ENCODE measurements at regions of chrX and their contacts with region 1.

Region 1: DNA sequence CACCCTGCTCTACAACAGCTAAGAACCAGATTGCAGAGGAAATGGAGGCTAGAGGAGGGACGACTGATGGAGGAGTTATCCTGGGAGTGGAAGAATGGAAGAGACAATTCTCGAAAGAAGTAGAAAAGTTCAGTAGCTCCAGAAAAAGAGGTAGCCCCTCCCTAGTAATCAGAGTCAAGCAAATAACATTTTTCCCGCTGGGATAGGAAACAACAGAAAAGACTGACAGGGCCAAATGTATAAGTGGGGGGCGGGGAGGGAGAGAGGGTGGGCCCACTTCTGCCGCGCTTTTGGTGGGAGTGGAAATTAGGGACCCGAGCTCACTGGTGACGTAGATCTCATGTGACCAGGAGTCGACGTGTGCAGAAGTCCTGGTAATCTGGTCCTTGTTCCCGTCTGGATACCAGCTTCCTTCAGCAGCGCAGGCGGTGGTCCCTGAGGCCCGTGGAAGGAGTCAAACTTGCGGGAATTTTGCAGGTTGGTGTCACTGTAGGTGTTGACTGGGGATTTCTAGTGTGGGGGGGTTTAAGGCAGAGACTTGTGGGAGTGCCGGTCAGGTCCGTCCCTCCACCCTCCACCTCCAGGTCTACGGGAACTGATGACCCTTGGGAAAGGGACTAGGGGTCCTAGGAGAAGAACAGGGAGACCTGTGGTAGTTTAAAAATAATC is at the start of gene TCEAL9:
- DNase-seq: peak; percentile 72

Region 2: GRCh38 chrX:103343105-103343504 is 13.2 kb before region 1 on chrX:
- CTCF ChIA-PET with region 1: interaction called, 4 read pairs
- POLR2A ChIA-PET with region 1: interaction called, 15 read pairs
- DNase-seq: peak; percentile 59

Region 3: DNA sequence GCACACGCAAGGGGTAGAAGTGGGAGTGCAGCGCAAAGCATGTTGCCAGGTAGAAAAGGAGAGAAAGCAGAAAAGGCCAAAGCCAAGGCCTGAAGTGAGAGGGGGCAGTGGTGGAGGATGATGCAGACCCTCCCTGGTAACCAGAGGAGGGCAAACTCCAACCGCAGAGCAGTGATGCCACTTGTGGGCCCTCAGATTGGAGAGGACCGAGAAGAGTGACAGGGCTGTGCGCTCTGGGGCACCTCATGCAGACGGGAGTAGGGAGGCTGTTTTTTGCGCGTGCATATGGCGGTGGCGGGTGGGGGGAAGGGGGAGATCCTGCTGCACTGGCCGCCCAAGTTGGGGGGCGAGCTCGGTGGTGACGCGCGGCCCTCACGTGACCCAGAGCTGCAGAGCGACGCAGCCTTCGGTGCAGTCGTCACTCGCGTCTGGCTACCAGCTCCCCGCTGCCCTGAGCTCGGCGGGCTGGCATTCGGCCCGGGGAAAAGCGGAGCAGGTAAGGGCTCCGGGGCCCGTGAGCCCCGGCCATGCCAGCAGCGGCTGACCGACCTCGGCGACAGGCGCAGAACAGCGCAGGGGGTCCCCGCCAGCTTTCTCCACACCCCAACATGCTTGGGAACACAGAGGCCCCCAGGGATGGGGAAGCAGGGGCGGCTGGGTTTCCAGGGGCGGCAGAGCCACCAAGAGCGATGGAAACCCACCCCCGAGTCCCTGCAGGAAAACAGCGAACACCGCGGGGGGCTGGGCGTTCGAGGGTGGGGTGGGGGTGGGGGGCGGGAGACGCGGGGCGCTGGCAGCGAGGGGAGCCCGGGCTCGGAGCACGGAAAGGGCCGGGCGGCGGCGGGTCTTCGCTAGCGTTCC is 20.1 kb after region 1 on chrX and contains the start of gene BEX3:
- CTCF ChIA-PET with region 1: interaction called, 3 read pairs
- POLR2A ChIA-PET with region 1: interaction called, 55 read pairs
- DNase-seq: peak; percentile 69

Region 4: GRCh38 chrX:103404231-103405208 is 48.3 kb after region 1 on chrX:
- CTCF ChIA-PET with region 1: no interaction called
- POLR2A ChIA-PET with region 1: interaction called, 14 read pairs
- DNase-seq: peak; percentile 75